Activated CD4-positive, alpha-beta T cell treated with anti-CD3 and anti-CD28 coated beads for 36 hours (primary cell): ENCODE measurements at regions of chr7 and their contacts with region 1.

Region 1: GRCh38 chr7:158976849-158977593 is 120.7 kb downstream of the DYNC2I1 start:
- DNase-seq: peak; percentile 94
- ATAC-seq: peak; percentile 82
- H3K4me3 Mint-ChIP-seq: peak overlapping the region; percentile 69
- H3K27ac Mint-ChIP-seq: peak overlapping the region; percentile 93
- H3K4me1 Mint-ChIP-seq: peaks cover 20% of the 10 kb centered on the region
- H3K27me3 Mint-ChIP-seq: no peaks in the 10 kb centered on the region

Region 2: DNA sequence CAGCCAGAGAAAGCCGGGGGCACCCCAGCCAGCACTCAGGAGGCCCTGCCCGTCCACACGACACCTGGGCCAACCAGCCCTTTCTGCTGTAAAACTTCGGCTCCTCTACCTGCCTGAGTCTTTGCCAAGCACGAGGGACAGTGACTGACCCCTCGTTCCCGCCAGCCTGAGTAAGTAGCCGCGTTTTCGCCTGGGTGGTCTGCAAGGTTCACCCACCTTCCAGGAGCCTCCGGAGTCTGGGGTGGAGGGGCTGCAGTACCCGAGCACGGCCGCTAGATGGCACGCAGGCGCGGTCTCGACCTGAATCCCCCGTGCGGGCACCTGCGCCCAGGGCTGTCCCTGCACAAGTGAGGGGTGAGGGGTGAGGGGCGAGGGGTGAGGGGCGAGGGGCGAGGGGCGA is 582.1 kb before region 1 on chr7:
- CTCF ChIA-PET with region 1: no interaction called
- POLR2A ChIA-PET with region 1: no interaction called
- intact Hi-C with region 1: loop called in 1 of 2 experiments (anchors 1 kb)
- DNase-seq: peak; percentile 67
- ATAC-seq: peak; percentile 30
- H3K4me3 Mint-ChIP-seq: no peak overlapping the region
- H3K27ac Mint-ChIP-seq: no peak overlapping the region
- H3K4me1 Mint-ChIP-seq: no peaks in the 10 kb centered on the region
- H3K27me3 Mint-ChIP-seq: no peaks in the 10 kb centered on the region

Region 3: GRCh38 chr7:158587162-158588084 is 389.6 kb before region 1 on chr7 and contains the start of gene PTPRN2:
- CTCF ChIA-PET with region 1: no interaction called
- POLR2A ChIA-PET with region 1: no interaction called
- intact Hi-C with region 1: loop called in 1 of 2 experiments (anchors 2 kb)
- DNase-seq: peak; percentile 83
- ATAC-seq: peak; percentile 87
- H3K4me3 Mint-ChIP-seq: peak within 1 kb of the TSS; percentile 38
- H3K27ac Mint-ChIP-seq: no peak within 1 kb of the TSS
- H3K4me1 Mint-ChIP-seq: peaks cover 4% of the 10 kb centered on the region
- H3K27me3 Mint-ChIP-seq: peaks cover 44% of the 10 kb centered on the region
- total RNA-seq, gene PTPRN2: 0.46 to 0.51 TPM

Region 4: DNA sequence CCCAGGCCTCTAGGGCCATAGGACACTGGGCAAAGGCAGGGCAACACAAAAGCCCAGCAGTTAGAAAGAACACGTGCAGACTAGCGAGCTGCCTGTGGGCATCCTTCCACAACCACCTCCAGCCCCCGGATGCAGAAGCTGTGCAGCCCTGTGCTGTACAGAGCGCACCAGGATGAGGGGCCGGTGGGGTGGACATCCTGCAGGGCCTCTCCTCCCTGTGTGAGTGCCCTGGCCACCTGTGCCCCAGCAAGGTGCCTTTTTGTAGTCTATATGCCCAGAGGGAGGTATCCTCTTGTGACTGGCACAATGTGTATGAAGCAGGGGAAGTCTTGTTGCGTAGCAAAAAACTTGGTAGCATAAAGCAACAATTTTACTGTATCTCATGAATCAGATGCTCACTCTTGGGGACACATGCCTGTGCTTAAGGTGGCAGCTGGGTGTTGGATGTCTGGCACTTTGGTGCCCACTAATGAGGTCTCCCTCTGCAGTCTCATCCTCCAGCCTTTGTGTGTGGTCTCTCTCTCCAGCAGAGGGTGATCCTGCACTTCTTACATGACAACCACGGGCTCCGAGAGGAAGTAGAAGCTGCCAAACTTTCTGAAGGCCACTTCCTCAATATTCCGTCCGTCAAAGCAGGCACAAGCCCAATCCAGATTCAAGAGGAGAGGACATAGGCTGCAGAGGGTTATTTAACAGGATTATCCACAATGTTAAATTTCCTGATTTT is 281.1 kb before region 1 on chr7:
- CTCF ChIA-PET with region 1: interaction called, 5 read pairs
- POLR2A ChIA-PET with region 1: no interaction called
- intact Hi-C with region 1: loop called (anchors 1 kb)
- DNase-seq: peak; percentile 28
- ATAC-seq: peak; percentile 52
- H3K4me3 Mint-ChIP-seq: no peak overlapping the region
- H3K27ac Mint-ChIP-seq: no peak overlapping the region
- H3K4me1 Mint-ChIP-seq: peaks cover 32% of the 10 kb centered on the region
- H3K27me3 Mint-ChIP-seq: no peaks in the 10 kb centered on the region

Region 5: GRCh38 chr7:158760936-158761335 is 216.1 kb before region 1 on chr7:
- CTCF ChIA-PET with region 1: no interaction called
- POLR2A ChIA-PET with region 1: no interaction called
- intact Hi-C with region 1: no loop called
- DNase-seq: no peak
- ATAC-seq: no peak
- H3K4me3 Mint-ChIP-seq: no peak overlapping the region
- H3K27ac Mint-ChIP-seq: no peak overlapping the region
- H3K4me1 Mint-ChIP-seq: peaks cover 14% of the 10 kb centered on the region
- H3K27me3 Mint-ChIP-seq: no peaks in the 10 kb centered on the region

Region 6: DNA sequence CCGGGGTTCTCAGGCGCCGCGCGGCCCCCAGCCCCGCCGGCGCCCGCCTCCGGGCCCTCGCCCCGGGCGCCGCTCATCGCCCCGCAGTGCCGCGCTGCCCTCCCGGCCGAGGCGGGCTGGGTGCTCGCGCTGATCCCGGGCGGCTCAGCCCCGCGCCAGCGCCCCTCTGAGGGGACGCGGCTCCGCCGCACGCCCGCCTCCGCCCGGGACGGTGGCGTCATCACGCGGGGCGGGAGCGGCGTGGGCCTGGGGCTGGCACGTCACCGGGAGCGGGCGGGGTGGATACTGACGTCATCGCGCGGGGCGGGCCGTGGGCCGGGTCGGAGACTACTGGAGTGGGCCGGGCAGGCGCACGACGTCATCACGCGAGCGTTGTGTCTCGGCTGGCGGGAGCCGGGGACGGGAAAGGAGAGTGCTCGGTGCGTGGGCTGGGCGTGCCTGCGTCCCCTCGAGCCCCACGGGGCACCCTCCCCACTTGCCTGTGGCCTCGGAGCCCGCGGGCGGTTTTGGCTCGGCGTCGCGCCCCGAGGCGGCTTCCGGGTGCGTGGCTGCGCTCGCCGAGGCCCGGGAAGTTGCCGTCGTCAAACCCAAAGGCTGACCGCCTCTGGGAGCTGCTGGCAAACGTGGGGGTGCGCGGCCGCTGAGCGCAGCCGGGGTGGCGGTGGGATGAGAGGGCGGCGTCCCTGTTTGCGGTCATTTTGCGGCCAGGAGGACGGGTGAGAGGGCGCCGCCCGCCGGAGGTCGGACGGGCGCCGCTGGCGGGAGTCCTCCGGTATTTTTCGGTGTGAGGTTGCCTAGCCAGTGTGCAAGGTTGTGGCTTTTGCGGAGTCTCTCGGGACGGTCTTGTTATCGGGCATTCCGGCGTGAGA is 147.4 kb before region 1 on chr7 and contains the start of gene ESYT2:
- CTCF ChIA-PET with region 1: no interaction called
- POLR2A ChIA-PET with region 1: no interaction called
- intact Hi-C with region 1: loop called (anchors 1 to 5 kb)
- DNase-seq: peak; percentile 99
- ATAC-seq: peak; percentile 78
- H3K4me3 Mint-ChIP-seq: peak within 1 kb of the TSS; percentile 94
- H3K27ac Mint-ChIP-seq: peak within 1 kb of the TSS; percentile 85
- H3K4me1 Mint-ChIP-seq: peaks cover 34% of the 10 kb centered on the region
- H3K27me3 Mint-ChIP-seq: no peaks in the 10 kb centered on the region
- total RNA-seq, gene ESYT2: 68.5 to 73.7 TPM

Region 7: DNA sequence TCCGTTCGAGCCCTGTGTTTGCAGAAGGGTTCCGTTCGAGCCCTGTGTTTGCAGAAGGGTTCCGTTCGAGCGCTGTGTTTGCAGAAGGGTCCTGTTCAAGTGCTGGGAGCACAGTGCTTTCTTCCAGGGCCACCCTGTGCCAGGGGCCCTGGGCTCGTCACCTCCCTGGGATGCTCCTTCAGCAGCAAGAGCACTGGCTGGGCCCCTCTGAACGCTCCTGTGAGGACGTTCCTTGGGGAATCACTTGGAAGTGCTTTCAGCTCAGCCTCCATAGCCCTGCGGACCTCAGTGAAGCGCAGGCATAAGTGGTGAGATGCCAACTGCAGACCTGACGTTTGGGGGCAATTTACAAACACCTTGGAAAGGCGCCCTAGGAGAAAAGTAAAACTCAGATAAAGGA is 17.1 kb before region 1 on chr7:
- CTCF ChIA-PET with region 1: interaction called, 12 read pairs
- POLR2A ChIA-PET with region 1: no interaction called
- intact Hi-C with region 1: no loop called
- DNase-seq: no peak
- ATAC-seq: no peak
- H3K4me3 Mint-ChIP-seq: no peak overlapping the region
- H3K27ac Mint-ChIP-seq: no peak overlapping the region
- H3K4me1 Mint-ChIP-seq: peaks cover 12% of the 10 kb centered on the region
- H3K27me3 Mint-ChIP-seq: no peaks in the 10 kb centered on the region

Region 8: DNA sequence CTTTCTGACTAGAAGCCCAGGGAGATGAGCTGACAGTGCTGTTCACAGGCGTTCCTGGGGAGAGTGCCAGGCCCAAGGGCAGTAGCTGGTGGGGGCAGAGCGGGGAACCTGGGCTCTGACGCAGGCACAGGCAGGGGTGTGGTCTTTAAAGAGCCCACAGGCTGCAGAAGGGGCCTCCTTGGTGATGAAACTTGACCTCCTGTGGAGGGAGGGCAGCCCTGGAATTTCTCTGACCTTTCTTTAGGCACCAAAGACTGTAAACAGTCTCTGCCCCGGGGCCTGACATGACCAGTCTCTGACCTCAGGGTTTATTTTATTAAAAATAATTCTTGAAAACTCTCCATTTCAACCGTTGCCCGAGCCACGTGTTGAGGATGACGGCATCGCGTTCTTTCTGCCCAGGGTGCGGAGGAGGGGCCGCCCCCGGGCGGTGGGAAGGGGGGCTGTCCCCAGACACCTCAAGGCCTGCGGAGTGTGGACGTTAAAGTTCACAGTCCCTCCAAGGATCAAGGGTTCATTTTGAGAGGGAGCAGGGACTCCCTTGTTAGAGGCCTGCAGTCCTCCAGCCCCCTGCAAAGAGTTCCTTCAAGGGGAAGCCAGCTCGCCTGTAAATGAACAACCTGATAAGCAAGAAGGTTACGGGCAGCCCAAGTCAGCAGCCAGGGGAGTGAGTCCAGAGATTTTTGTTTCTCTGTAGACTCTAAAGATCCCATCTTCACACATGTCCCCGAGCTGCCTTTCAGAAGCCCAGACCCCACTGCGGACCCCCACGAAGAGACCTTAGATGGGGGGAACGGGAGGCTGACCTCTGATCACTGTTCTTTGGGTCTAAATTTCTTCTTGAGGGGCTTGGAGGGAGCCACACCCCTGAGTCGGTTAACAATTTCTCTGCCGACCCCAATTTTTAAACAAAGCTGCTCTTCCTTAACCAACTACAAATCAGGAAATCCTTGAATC is 38.7 kb after region 1 on chr7:
- CTCF ChIA-PET with region 1: interaction called, 4 read pairs
- POLR2A ChIA-PET with region 1: no interaction called
- intact Hi-C with region 1: loop called in 1 of 2 experiments (anchors 1 kb)
- DNase-seq: no peak
- ATAC-seq: no peak
- H3K4me3 Mint-ChIP-seq: no peak overlapping the region
- H3K27ac Mint-ChIP-seq: no peak overlapping the region
- H3K4me1 Mint-ChIP-seq: peaks cover 30% of the 10 kb centered on the region
- H3K27me3 Mint-ChIP-seq: peaks cover 4% of the 10 kb centered on the region